Aorta (tissue), 5 donors: ENCODE measurements at regions of chr5 and their contacts with region 1.

Region 1: DNA sequence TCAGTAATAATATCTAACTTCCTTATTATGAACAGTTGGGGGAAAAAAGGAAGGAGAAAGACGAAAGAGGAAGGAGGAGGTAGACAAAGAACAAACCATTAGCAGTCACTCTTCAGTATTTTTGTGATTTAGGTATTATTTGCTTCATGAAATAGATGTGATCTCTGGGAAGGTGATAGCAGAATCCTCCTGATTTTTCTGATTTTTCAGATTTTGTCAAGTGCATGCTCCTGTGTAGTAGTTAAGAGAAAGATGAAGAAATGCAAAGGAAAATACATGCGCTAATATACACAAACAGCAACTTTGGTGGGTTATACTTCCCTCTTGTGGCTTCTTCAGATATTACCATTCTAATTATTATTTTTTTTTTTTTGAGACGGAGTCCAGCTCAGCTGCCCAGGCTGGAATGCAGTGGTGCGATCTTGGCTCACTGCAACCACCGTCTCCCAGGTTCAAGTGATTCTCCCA is 31.6 kb downstream of the LMNB1 start:
- DNase-seq: no peak
- ATAC-seq: peak; percentile 70
- H3K4me3 ChIP-seq: no peak overlapping the region
- H3K27ac ChIP-seq: no peak overlapping the region
- H3K4me1 ChIP-seq: no peaks in the 10 kb centered on the region
- H3K27me3 ChIP-seq: no peaks in the 10 kb centered on the region

Region 2: DNA sequence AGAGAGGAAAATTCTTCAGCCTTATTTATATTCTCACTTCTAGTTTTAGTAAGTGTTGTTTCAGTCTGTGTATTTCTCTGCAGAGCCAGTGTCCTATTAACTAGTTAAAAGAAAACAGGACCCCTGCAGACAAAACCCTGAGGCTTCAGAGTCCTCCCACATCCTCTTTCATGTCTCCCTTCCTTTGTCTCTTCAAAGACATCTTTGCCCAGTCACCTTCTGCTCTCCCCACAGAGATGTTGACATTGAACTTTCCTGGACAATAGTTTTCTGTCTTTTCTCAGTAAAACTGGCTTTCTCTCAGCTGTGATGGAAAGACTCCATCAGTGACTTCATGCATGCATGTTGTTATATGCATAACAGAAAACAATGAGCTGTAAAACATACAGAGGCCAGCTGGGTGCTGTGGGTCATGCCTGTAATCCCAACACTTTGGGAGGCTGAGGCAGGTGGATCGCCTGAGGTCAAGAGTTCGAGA is 365.1 kb before region 1 on chr5:
- intact Hi-C with region 1: no loop called
- DNase-seq: no peak
- ATAC-seq: no peak
- H3K4me3 ChIP-seq: no peak overlapping the region
- H3K27ac ChIP-seq: no peak overlapping the region
- H3K4me1 ChIP-seq: peaks cover 7 to 11% of the 10 kb centered on the region in 2 donors
- H3K27me3 ChIP-seq: no peaks in the 10 kb centered on the region

Region 3: DNA sequence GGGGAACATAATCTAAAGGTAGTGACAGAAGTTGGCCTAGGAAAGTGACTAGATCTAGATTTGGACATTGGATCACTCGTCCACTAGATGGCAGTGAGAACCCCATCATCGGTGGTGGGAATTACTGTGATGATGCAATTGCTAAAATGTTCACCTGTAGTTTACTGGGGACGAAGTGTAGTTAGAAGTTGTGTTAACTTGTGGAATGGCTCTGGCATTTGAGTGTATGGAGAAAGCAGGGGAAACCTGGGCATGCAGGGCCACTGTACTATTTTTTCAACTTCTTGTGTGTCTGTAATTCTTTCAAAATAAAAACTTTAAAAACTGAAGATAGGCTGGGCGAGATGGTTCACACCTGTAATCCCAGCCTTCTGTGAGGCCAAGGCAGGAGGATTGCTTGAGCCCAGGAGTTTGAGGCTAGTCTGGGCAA is 132.3 kb before region 1 on chr5:
- intact Hi-C with region 1: loop called in 1 of 2 experiments (anchors 5 kb)
- DNase-seq: no peak
- ATAC-seq: peak; percentile 83
- H3K4me3 ChIP-seq: no peak overlapping the region
- H3K27ac ChIP-seq: no peak overlapping the region
- H3K4me1 ChIP-seq: no peaks in the 10 kb centered on the region
- H3K27me3 ChIP-seq: no peaks in the 10 kb centered on the region

Region 4: DNA sequence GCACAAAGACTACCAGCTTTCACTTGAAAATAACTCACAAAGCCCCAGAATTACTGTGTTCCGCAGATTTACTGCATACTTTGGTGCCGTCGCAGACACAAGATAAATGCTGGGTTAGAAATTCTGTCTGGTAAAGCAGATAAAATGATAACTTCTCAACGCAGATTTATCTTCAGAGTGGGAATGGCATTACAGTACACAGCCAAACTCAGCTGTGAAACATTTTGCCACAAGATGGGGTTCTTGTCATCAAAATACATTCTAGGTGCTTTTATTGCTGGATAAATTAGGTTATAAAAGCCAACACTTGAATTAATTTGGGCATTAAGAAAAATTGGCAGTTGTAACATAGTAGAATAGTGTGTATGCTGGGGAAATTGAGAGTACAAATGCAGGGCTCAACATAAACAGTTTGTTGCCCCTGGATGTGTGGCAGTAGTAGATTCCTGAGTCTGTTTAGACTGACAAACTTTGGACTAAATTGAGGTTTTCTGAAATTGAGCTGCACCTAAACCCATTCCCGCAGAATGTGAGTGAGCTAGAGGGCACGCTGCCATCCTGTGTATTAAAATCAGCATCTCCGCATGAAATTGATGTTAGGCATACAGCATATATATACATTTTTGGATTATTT is 29.5 kb after region 1 on chr5:
- intact Hi-C with region 1: no loop called
- DNase-seq: no peak
- ATAC-seq: peak; percentile 48
- H3K4me3 ChIP-seq: no peak overlapping the region
- H3K27ac ChIP-seq: no peak overlapping the region
- H3K4me1 ChIP-seq: no peaks in the 10 kb centered on the region
- H3K27me3 ChIP-seq: no peaks in the 10 kb centered on the region